Dendritic cell treated with granulocyte-macrophage colony-stimulating factor and Interleukin-4, amounts not matched to agents 40 ng/mL and 50 ng/mL, for 4 days (primary cell): ENCODE measurements at regions of chr18 and their contacts with region 1.

Region 1: GRCh38 chr18:63422087-63422809 is at the start of gene VPS4B:
- H3K4me3 Mint-ChIP-seq: peak within 1 kb of the TSS; percentile 95
- H3K27ac Mint-ChIP-seq: peak within 1 kb of the TSS; percentile 98
- H3K4me1 Mint-ChIP-seq: peaks cover 21% of the 10 kb centered on the region
- H3K27me3 Mint-ChIP-seq: no peaks in the 10 kb centered on the region

Region 2: DNA sequence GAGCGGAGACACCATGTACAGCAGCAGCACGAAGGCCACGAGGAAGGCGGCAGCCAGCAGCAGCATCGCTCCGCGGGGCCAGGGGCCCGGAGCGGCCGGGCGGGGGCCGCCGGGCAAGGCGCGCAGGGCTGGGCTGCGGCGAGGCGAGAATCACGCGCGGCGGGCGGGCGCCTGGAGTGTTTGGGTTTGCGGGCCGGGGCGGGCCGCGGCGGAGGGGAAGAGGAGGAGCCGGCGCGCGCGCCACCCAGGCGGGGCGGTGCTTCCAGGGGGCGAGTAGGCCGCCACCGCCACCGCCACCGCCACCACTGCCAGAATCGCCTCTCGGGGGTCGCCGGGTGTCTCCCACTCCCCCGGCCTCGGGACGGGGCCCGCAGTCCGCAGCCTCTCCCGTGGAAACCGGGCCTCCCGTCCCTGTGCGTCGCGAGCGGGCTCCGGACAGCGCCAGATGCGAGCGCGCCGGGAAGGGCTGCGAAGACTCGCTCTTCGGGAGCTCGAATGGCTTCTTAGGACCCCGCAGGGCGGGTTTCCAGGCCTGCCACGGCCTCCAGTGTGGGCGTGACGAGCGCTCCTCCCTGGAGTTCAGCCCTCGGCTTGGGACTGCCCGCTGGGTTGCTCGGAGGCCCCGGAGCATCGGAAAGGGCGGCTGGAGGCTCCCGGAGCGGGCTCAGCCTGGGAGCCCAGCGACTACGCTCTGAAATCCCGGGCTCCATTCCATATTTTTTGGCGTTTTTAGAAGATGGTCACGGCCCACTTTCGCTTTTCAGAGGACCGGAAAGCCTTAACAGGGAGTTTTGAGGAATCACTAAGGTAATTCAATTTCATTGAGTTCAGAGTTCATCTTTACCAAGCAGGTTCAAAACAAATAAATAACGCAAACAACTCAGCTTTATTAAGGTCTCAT is 54.9 kb before region 1 on chr18 and contains the start of gene KDSR:
- intact Hi-C with region 1: loop called (anchors 1 kb)
- H3K4me3 Mint-ChIP-seq: peak within 1 kb of the TSS; percentile 84
- H3K27ac Mint-ChIP-seq: peak within 1 kb of the TSS; percentile 82
- H3K4me1 Mint-ChIP-seq: peaks cover 26% of the 10 kb centered on the region
- H3K27me3 Mint-ChIP-seq: peaks cover 2% of the 10 kb centered on the region

Region 3: DNA sequence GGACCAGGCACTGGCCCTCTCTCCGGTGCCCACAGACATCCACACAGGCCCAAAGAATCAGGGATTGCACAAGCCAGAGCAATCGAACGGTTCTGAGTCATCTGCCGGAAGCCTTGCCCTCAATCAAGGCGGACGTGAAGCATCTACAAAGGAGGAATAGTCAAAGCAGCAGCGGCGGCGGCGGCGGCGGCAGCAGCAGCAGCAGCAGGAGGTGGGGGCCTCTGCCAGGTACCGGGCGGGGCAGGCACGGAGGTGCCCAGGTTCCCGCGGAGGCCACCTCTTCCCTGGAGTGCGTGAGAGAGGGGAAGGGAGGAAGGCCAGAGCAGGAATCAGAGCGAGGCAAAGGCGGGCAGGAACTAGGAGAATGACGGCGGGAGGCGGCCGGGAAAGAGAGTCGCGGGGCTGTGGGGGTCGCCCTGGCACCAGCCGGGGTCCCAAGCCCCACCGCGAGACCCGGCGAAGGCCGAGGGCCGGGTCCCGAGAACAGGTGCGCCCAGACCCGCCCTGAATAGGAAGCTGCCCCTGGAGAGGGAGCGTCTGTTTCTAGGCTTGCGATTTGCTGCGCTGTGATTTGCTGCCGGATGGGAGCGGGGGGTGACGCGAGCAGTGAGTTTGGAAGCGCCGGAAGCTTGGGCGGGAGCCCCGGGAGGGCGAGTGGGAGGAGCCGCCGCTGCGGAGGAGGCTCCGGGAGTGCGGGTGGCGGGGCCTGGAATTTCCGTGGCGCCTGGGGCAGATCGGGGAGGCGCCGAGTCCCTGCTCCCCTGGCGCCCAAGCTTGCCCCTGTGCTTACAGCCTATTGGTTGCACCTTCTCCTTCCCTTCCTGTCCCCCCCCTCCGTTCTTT is 547.9 kb after region 1 on chr18 and contains the start of gene SERPINB8:
- intact Hi-C with region 1: loop called (anchors 5 kb)
- H3K4me3 Mint-ChIP-seq: peak within 1 kb of the TSS; percentile 97
- H3K27ac Mint-ChIP-seq: peak within 1 kb of the TSS; percentile 100
- H3K4me1 Mint-ChIP-seq: peaks cover 85% of the 10 kb centered on the region
- H3K27me3 Mint-ChIP-seq: no peaks in the 10 kb centered on the region